ENCODE measurements at regions of chr4 and their contacts with region 1.

Region 1: GRCh38 chr4:104064646-104065577 is 345.1 kb upstream of the TACR3 start:
- DNase-seq: peak; percentile 5
- H3K4me3 ChIP-seq: no peak overlapping the region
- H3K27ac ChIP-seq: no peak overlapping the region
- H3K4me1 ChIP-seq: no peaks in the 10 kb centered on the region
- H3K27me3 ChIP-seq: no peaks in the 10 kb centered on the region
- CTCF ChIP-seq: peak in 2 of 4 experiments; percentile 33 to 38
- POLR2A ChIP-seq: no peak

Region 2: GRCh38 chr4:103075901-103076739 is 988.8 kb before region 1 on chr4:
- intact Hi-C with region 1: no loop called
- DNase-seq: peak; percentile 30
- H3K4me3 ChIP-seq: peak overlapping the region; percentile 52 to 54
- H3K27ac ChIP-seq: peak overlapping the region; percentile 71 to 78
- H3K4me1 ChIP-seq: no peaks in the 10 kb centered on the region
- H3K27me3 ChIP-seq: no peaks in the 10 kb centered on the region
- CTCF ChIP-seq: no peak
- POLR2A ChIP-seq: no peak

Region 3: DNA sequence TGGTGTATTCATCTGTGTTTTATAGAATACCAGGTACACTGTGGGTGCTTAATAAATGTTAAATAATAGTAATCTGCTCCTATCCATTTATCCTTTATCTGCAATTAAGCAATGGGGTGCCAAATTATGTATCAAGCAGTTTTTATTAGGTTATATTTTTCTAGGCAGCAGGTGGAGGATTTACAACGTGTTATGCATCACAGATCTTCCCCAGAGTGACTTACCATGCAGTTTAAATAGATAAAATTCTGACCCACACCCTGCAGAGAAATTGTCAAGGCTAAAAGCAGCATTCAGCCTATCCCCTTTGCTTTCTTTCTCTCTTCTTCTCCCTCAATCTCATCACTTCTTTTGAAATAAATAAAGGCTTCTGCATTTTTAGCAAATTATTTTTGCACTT is 123.4 kb after region 1 on chr4:
- intact Hi-C with region 1: no loop called
- DNase-seq: no peak
- H3K4me3 ChIP-seq: no peak overlapping the region
- H3K27ac ChIP-seq: no peak overlapping the region
- H3K4me1 ChIP-seq: no peaks in the 10 kb centered on the region
- H3K27me3 ChIP-seq: no peaks in the 10 kb centered on the region
- CTCF ChIP-seq: no peak
- POLR2A ChIP-seq: no peak

Region 4: DNA sequence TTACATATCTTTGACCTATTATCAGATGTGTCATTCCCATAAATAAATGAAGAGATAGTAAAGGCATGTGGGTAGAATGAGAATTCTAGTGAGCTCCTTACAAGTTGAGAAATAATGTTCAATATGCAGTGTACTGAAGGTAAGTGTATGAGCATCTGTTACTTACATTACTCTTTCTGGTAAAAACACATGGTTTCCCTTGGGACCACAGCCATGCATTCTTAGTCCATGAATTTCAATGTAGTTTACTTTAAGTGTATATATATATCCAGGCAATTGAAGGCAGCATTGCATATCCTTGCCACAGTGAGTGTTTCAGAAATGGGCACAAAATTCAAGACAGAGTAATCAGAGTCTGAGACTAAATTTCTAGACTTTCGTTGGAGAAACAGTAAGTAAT is 152.6 kb after region 1 on chr4:
- intact Hi-C with region 1: no loop called
- DNase-seq: no peak
- H3K4me3 ChIP-seq: no peak overlapping the region
- H3K27ac ChIP-seq: no peak overlapping the region
- H3K4me1 ChIP-seq: no peaks in the 10 kb centered on the region
- H3K27me3 ChIP-seq: no peaks in the 10 kb centered on the region
- CTCF ChIP-seq: no peak
- POLR2A ChIP-seq: no peak

Region 5: DNA sequence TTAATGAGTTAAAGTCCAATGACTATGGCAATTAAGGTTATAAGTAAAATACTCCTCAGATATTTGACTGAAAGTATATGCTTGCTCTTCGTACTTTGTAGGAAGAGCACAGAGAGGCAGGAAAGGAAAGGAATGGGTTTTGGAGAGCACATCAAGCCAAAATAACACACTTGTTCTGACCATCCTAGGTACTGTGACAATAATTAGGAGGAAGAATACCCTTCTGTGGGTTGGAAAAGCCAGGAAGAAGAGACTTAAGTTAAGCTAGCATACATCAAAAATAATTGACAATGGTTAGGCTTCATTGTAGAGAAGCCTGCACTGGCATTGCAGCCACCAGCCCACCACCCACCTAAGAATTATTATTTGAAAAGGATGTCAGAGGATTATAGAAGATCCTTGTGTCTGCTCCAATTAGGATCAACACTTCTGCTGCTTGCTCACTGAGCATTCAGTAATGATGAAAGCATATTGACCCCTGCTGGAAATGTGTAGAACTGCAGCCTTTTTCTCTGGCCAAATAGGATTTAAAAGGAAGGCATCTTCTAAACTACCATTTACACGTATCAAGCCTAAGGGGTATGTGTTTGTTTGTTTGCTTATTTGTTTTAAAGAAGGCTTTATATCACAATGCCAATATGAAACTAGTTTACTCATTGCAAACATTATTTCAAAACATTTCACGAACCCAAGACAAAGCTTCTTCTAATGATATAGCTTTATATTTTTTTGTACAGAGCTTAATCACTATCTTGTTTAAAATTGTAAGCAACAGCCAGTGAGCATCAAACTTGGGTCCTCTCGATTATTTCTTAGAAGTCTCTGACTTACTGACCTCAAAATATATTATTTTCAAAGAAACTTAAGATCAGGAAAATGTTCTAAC is 795.6 kb after region 1 on chr4:
- intact Hi-C with region 1: loop called (anchors 10 kb)
- DNase-seq: peak; percentile 70
- H3K4me3 ChIP-seq: no peak overlapping the region
- H3K27ac ChIP-seq: no peak overlapping the region
- H3K4me1 ChIP-seq: no peaks in the 10 kb centered on the region
- H3K27me3 ChIP-seq: no peaks in the 10 kb centered on the region
- CTCF ChIP-seq: peak; percentile 79 to 91 (median 86)
- POLR2A ChIP-seq: no peak